AG04450 (cell line): ENCODE measurements at regions of chrX and their contacts with region 1.

Region 1: DNA sequence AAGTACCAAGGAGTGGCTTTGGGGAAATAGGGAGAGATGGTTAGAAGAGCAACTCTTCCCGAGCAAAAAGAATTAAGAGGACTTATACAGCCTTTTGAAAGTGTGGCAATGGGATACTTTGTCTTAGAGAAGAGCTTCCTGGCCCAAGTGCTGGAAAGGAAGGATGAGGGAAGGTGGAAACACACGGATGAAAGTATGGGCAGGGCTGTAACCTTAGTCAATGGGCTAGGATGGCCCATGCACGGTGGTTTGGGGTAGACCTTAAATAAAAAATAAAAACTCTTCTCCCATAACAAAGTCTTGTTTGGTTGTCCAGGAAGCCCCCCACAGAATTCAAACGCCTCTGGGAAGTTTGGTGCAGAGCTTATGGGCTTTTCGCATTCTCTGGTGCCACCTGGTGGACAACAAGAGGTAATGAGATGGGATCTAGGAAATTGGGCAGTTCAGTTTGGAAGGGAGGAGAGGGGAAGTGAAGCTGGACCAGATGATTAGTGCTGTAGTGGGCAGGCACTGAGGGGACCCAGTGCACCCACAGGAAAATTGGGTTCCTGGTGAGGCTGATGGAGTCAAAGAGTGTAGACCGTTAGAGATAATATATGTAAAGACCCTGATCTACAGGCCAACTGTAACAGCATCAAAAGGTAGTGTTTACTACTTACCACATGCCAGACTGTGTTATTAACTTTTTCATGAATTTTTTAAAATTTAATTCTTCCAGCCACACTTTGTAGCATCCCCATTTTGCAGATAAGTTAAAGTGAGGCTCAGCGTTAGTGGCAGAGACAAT is 13.8 kb upstream of the ENOX2 start:
- DNase-seq: peak; percentile 6
- H3K4me3 ChIP-seq: no peak overlapping the region
- H3K27ac ChIP-seq: no peak overlapping the region
- H3K27me3 ChIP-seq: no peaks in the 10 kb centered on the region
- CTCF ChIP-seq: peak; percentile 69

Region 2: GRCh38 chrX:130393451-130394074 is 523.3 kb before region 1 on chrX:
- CTCF ChIA-PET with region 1: interaction called, 55 read pairs
- POLR2A ChIA-PET with region 1: no interaction called
- DNase-seq: no peak
- H3K4me3 ChIP-seq: no peak overlapping the region
- H3K27ac ChIP-seq: no peak overlapping the region
- H3K27me3 ChIP-seq: no peaks in the 10 kb centered on the region
- CTCF ChIP-seq: peak; percentile 69

Region 3: DNA sequence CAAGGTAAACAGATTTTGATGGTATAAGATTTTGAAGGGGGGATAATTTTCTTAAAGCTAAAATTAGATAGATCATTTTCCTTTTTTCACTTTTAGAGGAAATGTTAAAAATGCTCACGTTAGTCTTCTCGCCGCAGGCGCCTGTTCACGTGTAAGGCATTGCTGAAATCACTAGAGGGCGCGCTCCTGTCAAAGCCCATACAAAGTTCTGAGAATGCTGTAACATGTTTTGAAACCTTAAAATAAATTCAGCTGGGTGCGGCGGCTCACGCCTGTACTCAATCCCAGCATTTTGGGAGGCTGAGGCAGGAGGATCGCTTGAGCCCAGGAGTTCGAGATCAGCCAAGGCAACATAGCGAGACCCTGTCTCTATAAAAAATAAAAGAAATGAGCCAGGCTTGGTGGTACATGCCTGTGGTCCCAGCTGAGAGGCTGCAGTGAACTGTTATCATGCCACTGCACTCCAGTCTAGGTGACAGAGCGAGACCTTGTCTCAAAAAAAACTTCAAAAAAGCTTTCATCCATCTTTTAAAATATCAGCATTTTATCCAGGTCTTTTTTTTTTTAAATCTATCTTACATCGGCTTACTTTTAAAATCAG is 377.0 kb before region 1 on chrX:
- CTCF ChIA-PET with region 1: interaction called, 101 read pairs
- POLR2A ChIA-PET with region 1: no interaction called
- DNase-seq: no peak
- H3K4me3 ChIP-seq: no peak overlapping the region
- H3K27ac ChIP-seq: no peak overlapping the region
- H3K27me3 ChIP-seq: no peaks in the 10 kb centered on the region
- CTCF ChIP-seq: peak; percentile 73

Region 4: DNA sequence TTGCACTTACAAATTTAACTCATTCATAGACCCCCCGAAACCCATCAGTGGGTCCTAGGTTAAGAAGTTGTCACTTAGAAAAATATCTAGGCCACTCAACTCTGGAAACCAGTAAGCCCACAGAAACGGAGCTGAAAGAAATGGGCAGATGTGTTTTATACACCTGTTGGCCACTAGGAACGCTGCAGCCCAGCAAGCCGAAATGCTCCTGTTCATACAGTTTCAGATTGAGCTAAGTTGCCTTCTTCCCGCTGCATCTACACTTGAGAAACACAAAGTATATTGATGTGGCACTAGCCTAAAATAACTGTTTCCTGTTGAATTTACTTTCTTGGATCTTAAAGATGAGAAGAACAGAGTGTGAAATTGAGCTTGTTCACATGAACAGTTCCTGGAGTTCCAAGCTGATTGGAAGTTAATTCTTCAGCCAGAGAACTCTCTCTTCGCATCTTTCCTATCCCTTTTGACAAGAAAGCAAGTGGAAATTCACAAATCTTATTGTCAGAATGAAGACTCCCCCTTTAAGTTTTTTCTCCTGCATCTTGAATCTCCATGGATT is 340.9 kb before region 1 on chrX:
- CTCF ChIA-PET with region 1: interaction called, 157 read pairs
- POLR2A ChIA-PET with region 1: no interaction called
- DNase-seq: peak; percentile 1
- H3K4me3 ChIP-seq: no peak overlapping the region
- H3K27ac ChIP-seq: no peak overlapping the region
- H3K27me3 ChIP-seq: no peaks in the 10 kb centered on the region
- CTCF ChIP-seq: peak; percentile 86